T-cell (primary cell): ENCODE measurements at regions of chr17 and their contacts with region 1.

Region 1: GRCh38 chr17:4329838-4330237 is 36.6 kb downstream of the UBE2G1 start:
- DNase-seq: no peak
- ATAC-seq: no peak
- H3K4me3 ChIP-seq: no peak overlapping the region
- H3K4me3 Mint-ChIP-seq: no peak overlapping the region
- H3K27ac ChIP-seq: no peak overlapping the region
- H3K27ac Mint-ChIP-seq: no peak overlapping the region
- H3K4me1 ChIP-seq: peaks cover 3 to 15% of the 10 kb centered on the region in 2 experiments
- H3K4me1 Mint-ChIP-seq: peaks cover 46 to 67% (median 57%) of the 10 kb centered on the region in 3 donors
- H3K27me3 ChIP-seq: no peaks in the 10 kb centered on the region
- H3K27me3 Mint-ChIP-seq: no peaks in the 10 kb centered on the region

Region 2: DNA sequence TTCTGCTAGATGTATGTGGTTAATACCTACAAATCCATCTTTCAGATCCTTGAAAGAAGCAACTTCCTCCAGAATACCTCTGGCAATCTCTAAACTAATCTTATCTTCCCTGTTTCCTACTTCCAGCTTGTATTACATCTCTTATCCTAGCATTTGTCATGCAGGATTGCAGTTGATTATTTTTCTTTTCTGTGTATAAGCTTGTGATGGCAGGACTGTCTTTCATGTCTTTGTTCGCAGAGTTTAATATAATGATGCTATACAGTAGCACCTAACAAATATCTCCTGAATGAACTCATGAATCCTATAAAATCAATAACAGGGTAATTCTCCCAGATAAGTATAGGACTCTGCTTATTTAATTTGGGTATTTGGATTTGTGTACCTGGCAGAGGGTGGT is 48.8 kb after region 1 on chr17:
- CTCF ChIA-PET with region 1: no interaction called
- POLR2A ChIA-PET with region 1: no interaction called
- DNase-seq: no peak
- ATAC-seq: no peak
- H3K4me3 ChIP-seq: no peak overlapping the region
- H3K4me3 Mint-ChIP-seq: no peak overlapping the region
- H3K27ac ChIP-seq: no peak overlapping the region
- H3K27ac Mint-ChIP-seq: no peak overlapping the region
- H3K4me1 ChIP-seq: peaks cover 8 to 21% of the 10 kb centered on the region in 2 experiments
- H3K4me1 Mint-ChIP-seq: peaks cover 15 to 28% (median 18%) of the 10 kb centered on the region in 3 donors
- H3K27me3 ChIP-seq: no peaks in the 10 kb centered on the region
- H3K27me3 Mint-ChIP-seq: no peaks in the 10 kb centered on the region

Region 3: DNA sequence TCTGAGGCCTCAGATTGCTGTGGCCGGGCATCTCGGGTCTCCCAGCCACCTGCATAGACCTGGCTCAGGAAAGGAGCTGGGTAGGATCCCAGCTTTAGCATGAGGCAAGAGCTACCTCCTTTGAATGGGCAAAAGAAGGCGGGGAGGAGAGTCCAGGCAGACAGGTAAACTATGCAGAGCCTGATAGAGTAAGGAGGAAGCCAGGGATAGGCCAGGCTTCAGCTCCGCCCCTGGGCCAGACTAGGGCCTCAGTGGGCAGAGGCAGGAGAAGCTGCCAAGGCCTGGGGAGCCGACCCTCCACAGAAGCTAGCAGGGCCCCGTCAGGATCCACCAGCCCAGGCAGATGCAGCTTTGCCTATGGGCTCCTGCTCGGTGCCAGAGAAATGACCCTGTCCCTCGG is 59.2 kb after region 1 on chr17:
- CTCF ChIA-PET with region 1: interaction called in 1 of 2 experiments, 3 read pairs
- POLR2A ChIA-PET with region 1: interaction called in 1 of 2 experiments, 13 read pairs
- DNase-seq: no peak
- ATAC-seq: no peak
- H3K4me3 ChIP-seq: no peak overlapping the region
- H3K4me3 Mint-ChIP-seq: no peak overlapping the region
- H3K27ac ChIP-seq: no peak overlapping the region
- H3K27ac Mint-ChIP-seq: no peak overlapping the region
- H3K4me1 ChIP-seq: no peaks in the 10 kb centered on the region
- H3K4me1 Mint-ChIP-seq: no peaks in the 10 kb centered on the region
- H3K27me3 ChIP-seq: no peaks in the 10 kb centered on the region
- H3K27me3 Mint-ChIP-seq: no peaks in the 10 kb centered on the region